ENCODE measurements at regions of chr3 and their contacts with region 1.

Region 1: DNA sequence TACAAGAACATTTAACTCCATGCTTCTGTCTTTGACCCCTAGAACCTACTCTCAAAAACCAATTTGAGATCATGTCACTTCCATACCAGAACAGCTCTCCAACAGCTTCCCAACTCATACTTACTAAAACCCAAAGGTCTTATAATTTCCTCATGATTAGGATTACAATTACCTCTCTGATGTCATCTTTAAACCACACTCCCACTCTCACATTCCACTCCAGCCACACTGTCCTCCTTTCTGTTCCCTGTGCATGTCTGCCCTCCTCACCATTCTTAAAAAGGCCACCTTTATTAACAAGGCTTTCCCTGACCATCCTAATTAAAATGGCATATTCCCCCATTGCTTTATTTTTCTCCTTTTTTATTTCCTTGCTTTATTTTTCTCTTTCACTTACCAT is 18.9 kb downstream of the PHC3 start:
- DNase-seq: no peak
- H3K4me3 Mint-ChIP-seq: no peak overlapping the region
- H3K27ac Mint-ChIP-seq: peak overlapping the region; percentile 11
- H3K4me1 Mint-ChIP-seq: peaks cover 50% of the 10 kb centered on the region
- H3K27me3 Mint-ChIP-seq: no peaks in the 10 kb centered on the region

Region 2: DNA sequence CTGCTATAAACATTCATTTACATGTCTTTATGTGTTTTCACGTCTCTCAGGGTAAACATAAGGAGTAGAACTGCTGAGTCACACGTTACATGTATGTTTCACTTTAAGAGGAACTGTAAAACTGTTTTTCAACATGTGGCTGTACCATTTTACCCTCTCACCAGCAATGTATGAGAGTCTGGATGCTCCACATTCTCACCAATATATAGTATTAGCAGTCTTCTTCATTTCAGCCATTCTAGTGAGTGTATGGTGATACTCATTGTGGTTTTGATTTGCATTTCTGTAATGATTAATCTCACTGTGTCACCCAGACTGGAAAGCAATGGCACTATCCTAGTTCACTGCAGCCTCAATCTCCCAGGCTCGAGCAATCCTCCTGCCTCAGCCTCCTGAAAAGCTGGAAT is 18.2 kb before region 1 on chr3:
- intact Hi-C with region 1: loop called (anchors 2 kb)
- DNase-seq: no peak
- H3K4me3 Mint-ChIP-seq: no peak overlapping the region
- H3K27ac Mint-ChIP-seq: no peak overlapping the region
- H3K4me1 Mint-ChIP-seq: peaks cover 13% of the 10 kb centered on the region
- H3K27me3 Mint-ChIP-seq: no peaks in the 10 kb centered on the region